Right ventricle myocardium superior (tissue), 1 donor: ENCODE measurements at regions of chr5 and their contacts with region 1.

Region 1: DNA sequence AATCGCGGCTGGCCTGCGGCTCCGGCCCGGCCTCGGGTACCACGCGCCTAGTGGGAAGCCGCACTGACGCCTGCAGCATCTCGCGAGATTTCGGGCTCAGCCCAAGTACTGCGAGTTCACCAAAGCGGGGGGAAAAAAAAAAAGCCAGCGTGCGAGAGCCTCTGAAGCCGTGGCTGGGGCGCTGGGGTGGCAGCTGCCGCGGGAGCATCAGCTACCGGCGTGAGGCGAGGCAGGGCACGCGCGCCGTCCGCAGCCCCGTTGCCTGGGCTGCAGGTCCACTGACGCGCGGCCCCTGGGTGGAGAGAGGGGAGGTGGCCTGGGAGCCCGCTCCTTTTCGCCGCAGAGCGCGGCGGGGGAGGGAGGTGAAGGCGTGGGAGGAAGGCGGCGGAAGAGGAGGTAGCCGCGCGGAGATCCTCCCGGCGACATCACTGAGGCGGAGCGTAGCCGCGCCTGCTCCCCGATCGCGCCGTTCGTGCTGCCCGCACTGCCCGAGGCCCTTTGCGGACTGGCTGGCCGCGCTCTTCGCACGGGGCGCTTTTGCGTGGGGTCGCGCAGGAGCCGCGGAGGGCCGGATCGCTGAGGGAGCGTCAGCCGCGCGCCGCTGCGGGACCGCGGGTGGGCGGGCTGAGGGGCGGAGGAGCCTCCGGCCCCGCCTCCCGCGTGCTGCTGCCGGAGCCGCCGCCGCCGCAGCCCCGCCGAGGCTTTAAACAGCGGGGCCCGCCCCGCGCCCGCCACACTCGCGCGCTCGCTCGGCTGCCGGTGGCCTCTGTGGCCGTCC is at the start of gene SLC12A2:
- DNase-seq: peak; percentile 95
- ATAC-seq: peak; percentile 93
- total RNA-seq, gene SLC12A2: 11.6 TPM

Region 2: GRCh38 chr5:127163750-127164149 is 919.5 kb before region 1 on chr5:
- intact Hi-C with region 1: no loop called
- DNase-seq: no peak
- ATAC-seq: no peak

Region 3: GRCh38 chr5:127757576-127757975 is 325.6 kb before region 1 on chr5:
- intact Hi-C with region 1: loop called (anchors 10 kb)
- DNase-seq: no peak
- ATAC-seq: peak; percentile 81

Region 4: GRCh38 chr5:127875235-127876021 is 207.8 kb before region 1 on chr5:
- intact Hi-C with region 1: loop called (anchors 10 kb)
- DNase-seq: peak; percentile 53
- ATAC-seq: peak; percentile 91

Region 5: GRCh38 chr5:128395073-128395472 is 311.9 kb after region 1 on chr5:
- intact Hi-C with region 1: no loop called
- DNase-seq: peak; percentile 45
- ATAC-seq: peak; percentile 84